Panc1 (cell line): ENCODE measurements at regions of chr7 and their contacts with region 1.

Region 1: GRCh38 chr7:55903985-55904759 is 16.9 kb downstream of the ZNF713 start:
- DNase-seq: no peak
- ATAC-seq: no peak
- H3K4me3 ChIP-seq: no peak overlapping the region
- H3K27ac ChIP-seq: no peak overlapping the region
- H3K4me1 ChIP-seq: no peaks in the 10 kb centered on the region
- H3K27me3 ChIP-seq: no peaks in the 10 kb centered on the region
- CTCF ChIP-seq: no peak

Region 2: GRCh38 chr7:54858008-54858692 is 1046.0 kb before region 1 on chr7:
- CTCF ChIA-PET with region 1: no interaction called
- POLR2A ChIA-PET with region 1: no interaction called
- in situ Hi-C with region 1: no loop called
- intact Hi-C with region 1: no loop called
- DNase-seq: no peak
- ATAC-seq: no peak
- H3K4me3 ChIP-seq: no peak overlapping the region
- H3K27ac ChIP-seq: no peak overlapping the region
- H3K4me1 ChIP-seq: no peaks in the 10 kb centered on the region
- H3K27me3 ChIP-seq: no peaks in the 10 kb centered on the region
- CTCF ChIP-seq: no peak

Region 3: DNA sequence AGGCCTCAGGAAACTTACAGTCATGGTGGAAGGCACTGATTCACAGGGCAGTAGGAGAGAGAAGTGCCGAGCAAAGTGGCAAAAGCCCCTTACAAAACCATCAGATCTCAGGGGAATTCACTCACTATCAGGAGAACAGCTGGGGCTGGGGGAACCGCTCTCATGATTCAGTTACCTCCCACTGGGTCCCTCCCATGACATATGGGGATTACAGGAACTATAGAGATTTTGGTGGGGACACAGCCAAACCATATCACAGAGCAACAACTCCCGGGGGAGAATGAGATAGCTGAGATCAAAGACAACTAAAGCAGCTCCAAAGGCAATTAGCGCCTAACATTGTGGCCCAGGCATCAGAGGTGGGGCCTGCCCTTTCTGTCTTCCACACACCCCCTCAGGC is 246.5 kb before region 1 on chr7:
- CTCF ChIA-PET with region 1: no interaction called
- POLR2A ChIA-PET with region 1: interaction called, 13 read pairs
- in situ Hi-C with region 1: no loop called
- intact Hi-C with region 1: no loop called
- DNase-seq: no peak
- ATAC-seq: no peak
- H3K4me3 ChIP-seq: no peak overlapping the region
- H3K27ac ChIP-seq: no peak overlapping the region
- H3K4me1 ChIP-seq: no peaks in the 10 kb centered on the region
- H3K27me3 ChIP-seq: no peaks in the 10 kb centered on the region; the same call in 1 of the 2 replicates
- CTCF ChIP-seq: no peak